ENCODE measurements at regions of chr17 and their contacts with region 1.

Region 1: GRCh38 chr17:79087428-79088143 is 13.0 kb downstream of the ENGASE start:
- DNase-seq: no peak
- H3K4me3 ChIP-seq: no peak overlapping the region
- H3K27me3 ChIP-seq: no peaks in the 10 kb centered on the region
- CTCF ChIP-seq: peak; percentile 89

Region 2: DNA sequence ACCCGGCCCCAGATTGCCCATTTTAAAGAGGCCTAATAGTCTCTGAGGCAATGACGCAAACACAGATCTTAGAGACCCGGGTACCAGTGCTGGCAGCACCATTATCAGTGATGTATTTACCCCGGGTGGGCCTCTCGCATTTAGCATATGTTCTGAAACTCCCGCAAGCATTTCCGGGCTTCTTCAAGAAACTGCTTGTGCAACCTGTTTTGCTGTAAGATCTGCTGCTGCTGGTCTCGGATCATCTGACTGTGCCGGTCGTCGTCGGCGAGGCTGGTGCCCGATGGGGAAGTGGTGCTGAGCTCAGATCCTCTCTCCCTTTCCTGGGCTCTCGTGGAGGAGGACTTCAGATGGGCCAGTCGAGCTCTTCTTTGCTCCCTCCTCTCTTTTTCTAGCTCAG is 197.1 kb before region 1 on chr17:
- CTCF ChIA-PET with region 1: no interaction called
- POLR2A ChIA-PET with region 1: no interaction called
- DNase-seq: no peak
- H3K4me3 ChIP-seq: no peak overlapping the region
- H3K27me3 ChIP-seq: no peaks in the 10 kb centered on the region
- CTCF ChIP-seq: no peak

Region 3: GRCh38 chr17:79019632-79020584 is 67.7 kb before region 1 on chr17:
- CTCF ChIA-PET with region 1: interaction called, 51 read pairs
- POLR2A ChIA-PET with region 1: no interaction called
- DNase-seq: no peak
- H3K4me3 ChIP-seq: no peak overlapping the region
- H3K27me3 ChIP-seq: no peaks in the 10 kb centered on the region
- CTCF ChIP-seq: peak; percentile 77

Region 4: GRCh38 chr17:79074650-79075445 is 12.7 kb before region 1 on chr17 and contains the start of gene ENGASE:
- CTCF ChIA-PET with region 1: interaction called, 31 read pairs
- POLR2A ChIA-PET with region 1: no interaction called
- DNase-seq: peak; percentile 35
- H3K4me3 ChIP-seq: peak within 1 kb of the TSS; percentile 71
- H3K27me3 ChIP-seq: peaks cover 2% of the 10 kb centered on the region
- CTCF ChIP-seq: no peak
- polyA plus RNA-seq, gene ENGASE: 4.7 and 7.4 TPM in 2 replicates

Region 5: GRCh38 chr17:79400989-79401703 is 313.6 kb after region 1 on chr17:
- CTCF ChIA-PET with region 1: interaction called, 181 read pairs
- POLR2A ChIA-PET with region 1: no interaction called
- DNase-seq: no peak
- H3K4me3 ChIP-seq: peak overlapping the region; percentile 15
- H3K27me3 ChIP-seq: peaks cover 19% of the 10 kb centered on the region
- CTCF ChIP-seq: peak; percentile 98

Region 6: DNA sequence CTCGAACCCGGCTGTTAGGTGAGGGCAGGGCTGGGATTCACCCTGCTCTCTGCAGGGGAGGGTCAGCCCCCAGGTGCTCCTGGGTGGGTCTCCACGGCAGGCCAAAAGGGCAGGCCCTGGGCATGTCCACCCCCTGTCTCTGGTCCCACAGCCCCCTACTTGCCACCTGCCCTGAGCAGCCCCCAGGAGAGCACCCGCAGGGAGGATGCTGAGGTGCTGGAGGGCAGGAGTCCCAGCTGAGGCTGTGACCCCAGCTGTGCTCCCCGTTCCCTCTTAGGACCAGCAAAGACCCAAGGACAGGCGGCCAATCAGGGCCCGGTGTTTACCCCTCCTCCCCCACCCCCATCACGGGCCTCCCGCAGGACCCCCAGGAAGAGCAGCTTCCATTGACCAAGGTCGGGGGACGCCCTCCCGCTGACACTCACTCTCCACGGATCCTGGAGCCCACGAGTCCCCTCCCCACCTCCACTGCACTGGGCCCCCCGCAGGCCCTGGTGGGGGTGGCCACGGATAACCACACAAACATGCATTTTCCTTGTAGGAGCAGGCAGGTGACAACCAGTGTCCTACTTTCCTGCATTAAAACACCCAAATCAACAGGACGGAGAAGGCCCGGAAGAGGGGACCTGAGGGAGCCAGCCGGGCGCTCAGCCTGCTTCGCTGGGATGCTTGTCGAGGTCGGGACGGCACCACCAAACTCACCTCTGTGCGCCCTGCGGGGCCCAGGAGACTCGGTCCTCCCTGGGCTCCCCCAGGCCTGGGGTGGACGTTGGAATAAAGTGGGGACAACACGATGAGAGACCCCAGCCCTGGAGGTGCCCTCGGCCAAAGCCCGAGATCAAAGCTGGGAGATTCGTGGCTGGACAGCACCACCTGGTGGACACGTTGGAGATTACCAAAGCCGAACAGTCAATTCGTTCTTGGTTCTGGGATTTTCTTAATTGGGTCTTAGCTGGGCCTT is 620.6 kb after region 1 on chr17:
- CTCF ChIA-PET with region 1: interaction called, 15 read pairs
- POLR2A ChIA-PET with region 1: no interaction called
- DNase-seq: no peak
- H3K4me3 ChIP-seq: no peak overlapping the region
- H3K27me3 ChIP-seq: no peaks in the 10 kb centered on the region
- CTCF ChIP-seq: peak; percentile 76